ENCODE measurements at regions of chr2 and their contacts with region 1.

Region 1: DNA sequence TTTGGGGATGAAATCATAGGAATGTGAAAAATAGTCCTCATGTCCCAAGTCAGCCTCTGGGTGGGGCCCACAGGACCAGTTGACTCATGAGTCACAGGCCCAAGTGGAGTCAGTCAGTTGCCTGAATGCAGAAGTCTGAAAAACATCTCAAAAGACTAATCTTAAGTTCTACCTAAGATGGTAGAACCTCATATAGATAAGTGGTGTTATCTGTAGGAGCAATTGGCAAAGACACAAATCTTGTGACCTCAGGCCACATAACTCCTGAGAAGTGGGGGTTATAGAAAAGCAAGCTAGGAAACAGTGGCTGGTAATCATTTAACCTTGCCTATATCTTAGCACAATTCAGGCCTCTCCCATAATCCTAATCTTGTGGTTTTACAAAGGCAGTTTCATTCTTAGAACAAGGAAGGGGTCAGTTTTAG is 257.1 kb upstream of the SPOPL start:
- DNase-seq: peak in 1 of 2 donors; percentile 50
- ATAC-seq: no peak
- H3K4me3 ChIP-seq: no peak overlapping the region
- H3K27ac ChIP-seq: peak overlapping the region in 1 of 2 donors; percentile 76
- H3K4me1 ChIP-seq: peaks cover 4 to 7% of the 10 kb centered on the region in 2 donors
- H3K27me3 ChIP-seq: no peaks in the 10 kb centered on the region

Region 2: DNA sequence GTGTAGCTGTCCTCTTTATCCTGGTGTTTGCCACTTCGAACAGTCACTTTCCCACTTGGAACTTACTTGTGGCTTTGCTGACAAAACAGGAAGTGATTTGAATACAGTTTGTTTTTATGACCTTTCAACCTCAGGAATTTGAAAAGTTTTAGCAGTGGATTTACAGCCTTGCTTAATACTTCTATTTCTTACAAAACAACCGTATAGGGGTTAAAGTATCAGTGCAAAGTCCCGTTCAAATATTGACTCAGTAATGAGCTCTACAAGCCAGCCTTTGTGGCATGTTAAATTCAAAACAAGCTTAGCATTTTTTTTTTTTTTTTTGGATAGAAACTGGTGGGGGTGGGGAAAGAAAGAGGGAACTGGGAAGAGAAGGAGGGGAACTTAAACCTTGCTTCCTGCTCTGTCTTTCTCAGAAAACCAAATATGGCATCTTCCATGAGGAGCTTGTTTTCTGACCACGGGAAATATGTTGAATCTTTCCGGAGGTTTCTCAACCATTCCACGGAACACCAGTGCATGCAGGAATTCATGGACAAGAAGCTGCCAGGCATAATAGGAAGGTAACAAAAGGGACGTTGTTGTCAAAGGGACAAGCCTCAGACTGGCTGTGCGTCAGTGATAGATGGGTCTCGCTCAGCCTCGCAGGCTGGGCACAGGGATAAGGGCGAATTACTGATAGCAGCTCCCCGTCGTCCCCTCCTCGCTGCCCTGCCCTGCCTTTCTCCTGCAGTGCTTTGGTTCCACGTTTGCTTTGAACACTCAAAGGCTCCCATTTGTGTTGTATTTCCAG is 280.3 kb before region 1 on chr2 and contains the start of gene HNMT:
- intact Hi-C with region 1: loop called (anchors 10 kb)
- DNase-seq: peak in 1 of 2 donors; percentile 55
- ATAC-seq: peak; percentile 77
- H3K4me3 ChIP-seq: peak within 1 kb of the TSS; percentile 20 to 90
- H3K27ac ChIP-seq: peak within 1 kb of the TSS; percentile 60 to 83
- H3K4me1 ChIP-seq: peaks cover 0 to 2% of the 10 kb centered on the region in 2 donors
- H3K27me3 ChIP-seq: no peaks in the 10 kb centered on the region
- total RNA-seq, gene HNMT: 35.8 to 82.8 TPM

Region 3: GRCh38 chr2:138356178-138356577 is 111.7 kb after region 1 on chr2:
- intact Hi-C with region 1: loop called in 1 of 2 experiments (anchors 10 kb)
- DNase-seq: no peak
- ATAC-seq: peak; percentile 72
- H3K4me3 ChIP-seq: peak overlapping the region in 1 of 2 donors; percentile 28
- H3K27ac ChIP-seq: no peak overlapping the region
- H3K4me1 ChIP-seq: peaks cover 2 to 4% of the 10 kb centered on the region in 2 donors
- H3K27me3 ChIP-seq: no peaks in the 10 kb centered on the region

Region 4: DNA sequence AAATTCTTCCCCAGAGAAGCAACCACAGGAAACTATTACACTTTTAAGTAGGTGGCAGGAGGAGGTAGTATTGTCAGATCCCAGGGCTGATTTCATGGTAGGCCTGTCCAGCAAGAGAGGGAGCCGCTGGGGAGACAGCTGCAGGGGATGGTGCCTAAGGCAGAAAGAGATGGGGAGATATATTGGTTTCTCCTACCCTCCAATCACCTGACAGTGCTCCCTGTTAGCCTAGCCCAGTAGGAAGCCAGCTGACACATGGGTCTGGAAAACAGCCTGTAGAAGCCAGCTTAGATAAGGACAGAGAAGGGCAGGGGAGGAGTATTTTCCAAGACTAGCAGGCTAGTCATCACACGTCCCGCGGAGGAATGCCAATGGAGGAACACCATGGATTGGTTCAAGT is 248.8 kb after region 1 on chr2:
- intact Hi-C with region 1: loop called in 1 of 2 experiments (anchors 10 kb)
- DNase-seq: no peak
- ATAC-seq: no peak
- H3K4me3 ChIP-seq: no peak overlapping the region
- H3K27ac ChIP-seq: no peak overlapping the region
- H3K4me1 ChIP-seq: peaks cover 0 to 2% of the 10 kb centered on the region in 2 donors
- H3K27me3 ChIP-seq: no peaks in the 10 kb centered on the region